ENCODE measurements at regions of chr12 and their contacts with region 1.

Region 1: DNA sequence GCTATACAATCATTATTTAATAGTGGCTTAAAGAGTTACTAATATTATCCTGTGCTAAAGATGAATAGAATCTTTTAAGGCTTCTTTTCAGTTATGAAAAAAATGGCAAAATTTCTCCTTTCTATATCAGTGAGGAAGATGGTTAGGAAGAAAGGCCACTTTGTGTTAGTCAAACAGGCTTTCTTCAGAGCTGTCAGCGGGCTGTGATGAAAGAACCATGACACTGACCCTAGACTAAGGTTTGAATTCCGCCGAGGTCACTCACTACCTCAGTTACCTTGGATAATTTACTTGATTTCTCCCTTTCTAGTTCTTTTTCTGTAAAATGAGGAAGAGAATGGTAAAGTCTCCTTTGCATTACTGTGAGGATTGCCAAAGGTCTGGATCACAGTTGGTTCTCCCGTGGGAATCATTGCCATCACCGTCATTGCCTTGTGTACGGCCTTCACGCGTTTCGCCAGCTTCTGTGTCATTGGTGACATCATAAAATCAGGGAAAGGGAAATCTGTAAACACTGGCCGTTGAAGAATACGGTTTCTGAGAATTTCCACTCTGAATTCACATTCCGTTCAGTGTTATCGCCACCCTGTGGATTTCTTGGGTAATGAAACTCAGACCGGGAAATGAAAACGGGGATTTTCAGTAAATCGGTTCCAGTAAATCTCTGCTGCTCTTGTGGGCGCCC is 26.7 kb upstream of the YBX3 start:
- DNase-seq: peak; percentile 62 to 72 (median 69)
- H3K4me3 ChIP-seq: no peak overlapping the region
- H3K4me3 Mint-ChIP-seq: peak overlapping the region in 6 of 8 donors; percentile 30 to 70 (median 60)
- H3K27ac ChIP-seq: no peak overlapping the region
- H3K27ac Mint-ChIP-seq: peak overlapping the region in 3 of 7 donors; percentile 7 to 50 (median 41)
- H3K4me1 ChIP-seq: peaks cover 10% of the 10 kb centered on the region
- H3K4me1 Mint-ChIP-seq: peaks cover 5 to 8% (median 6%) of the 10 kb centered on the region in 4 donors
- H3K27me3 ChIP-seq: peaks cover 6% of the 10 kb centered on the region
- H3K27me3 Mint-ChIP-seq: peaks cover 17 to 29% of the 10 kb centered on the region in 2 donors

Region 2: DNA sequence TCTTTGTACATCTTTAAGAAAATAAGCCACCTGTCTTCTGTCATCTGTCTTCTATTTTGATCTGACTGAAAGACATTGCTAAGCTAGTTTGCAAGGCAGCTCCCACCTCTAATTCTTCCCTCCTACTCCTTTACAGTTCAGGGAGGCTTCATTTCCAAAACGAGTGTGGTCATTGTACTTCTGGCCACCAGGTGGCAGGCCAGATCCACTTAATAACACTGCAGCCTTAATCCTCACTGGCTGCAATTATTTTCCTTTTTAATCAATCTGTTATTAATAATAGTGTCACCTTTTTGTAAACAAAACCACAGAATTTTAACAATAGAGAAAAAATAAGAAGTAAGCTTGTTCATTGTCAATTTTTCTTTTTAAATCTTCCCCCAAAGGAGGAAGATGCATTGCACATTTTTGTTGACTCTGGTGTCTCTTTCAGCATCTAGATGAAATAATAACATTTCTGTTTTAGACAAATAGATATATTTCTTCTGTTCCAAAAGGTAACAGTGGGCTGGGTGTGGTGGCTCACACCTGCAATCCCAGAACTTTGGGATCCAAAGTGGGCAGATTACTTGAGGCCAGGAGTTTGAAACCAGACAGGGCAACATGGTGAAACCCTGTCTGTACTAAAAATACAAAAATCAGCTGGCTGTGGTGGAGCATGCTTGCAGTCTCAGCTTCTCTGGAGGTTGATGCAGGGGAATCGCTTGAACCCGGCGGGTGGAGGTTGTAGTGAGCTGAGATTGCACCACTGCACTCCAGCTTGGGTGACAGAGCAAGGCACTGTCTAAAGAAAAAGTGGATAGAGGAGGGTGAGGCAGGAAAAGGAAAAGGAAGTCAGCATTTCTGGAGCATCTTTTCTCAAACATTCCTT is 513.8 kb before region 1 on chr12:
- CTCF ChIA-PET with region 1: interaction called, 18 read pairs
- POLR2A ChIA-PET with region 1: no interaction called
- intact Hi-C with region 1: loop called (anchors 1 kb)
- DNase-seq: peak in 4 of 5 donors; percentile 30 to 43 (median 38)
- H3K4me3 ChIP-seq: no peak overlapping the region
- H3K4me3 Mint-ChIP-seq: no peak overlapping the region
- H3K27ac ChIP-seq: no peak overlapping the region
- H3K27ac Mint-ChIP-seq: no peak overlapping the region
- H3K4me1 ChIP-seq: no peaks in the 10 kb centered on the region
- H3K4me1 Mint-ChIP-seq: peaks cover 0 to 2% (median 0%) of the 10 kb centered on the region in 4 donors
- H3K27me3 ChIP-seq: no peaks in the 10 kb centered on the region
- H3K27me3 Mint-ChIP-seq: peaks cover 0 to 1% of the 10 kb centered on the region in 2 donors

Region 3: GRCh38 chr12:10562306-10562933 is 187.4 kb before region 1 on chr12:
- CTCF ChIA-PET with region 1: no interaction called
- POLR2A ChIA-PET with region 1: no interaction called
- intact Hi-C with region 1: loop called (anchors 2 kb)
- DNase-seq: peak in 4 of 5 donors; percentile 31 to 45 (median 38)
- H3K4me3 ChIP-seq: no peak overlapping the region
- H3K4me3 Mint-ChIP-seq: no peak overlapping the region
- H3K27ac ChIP-seq: no peak overlapping the region
- H3K27ac Mint-ChIP-seq: no peak overlapping the region
- H3K4me1 ChIP-seq: no peaks in the 10 kb centered on the region
- H3K4me1 Mint-ChIP-seq: no peaks in the 10 kb centered on the region
- H3K27me3 ChIP-seq: no peaks in the 10 kb centered on the region
- H3K27me3 Mint-ChIP-seq: peaks cover 11 to 24% of the 10 kb centered on the region in 2 donors

Region 4: DNA sequence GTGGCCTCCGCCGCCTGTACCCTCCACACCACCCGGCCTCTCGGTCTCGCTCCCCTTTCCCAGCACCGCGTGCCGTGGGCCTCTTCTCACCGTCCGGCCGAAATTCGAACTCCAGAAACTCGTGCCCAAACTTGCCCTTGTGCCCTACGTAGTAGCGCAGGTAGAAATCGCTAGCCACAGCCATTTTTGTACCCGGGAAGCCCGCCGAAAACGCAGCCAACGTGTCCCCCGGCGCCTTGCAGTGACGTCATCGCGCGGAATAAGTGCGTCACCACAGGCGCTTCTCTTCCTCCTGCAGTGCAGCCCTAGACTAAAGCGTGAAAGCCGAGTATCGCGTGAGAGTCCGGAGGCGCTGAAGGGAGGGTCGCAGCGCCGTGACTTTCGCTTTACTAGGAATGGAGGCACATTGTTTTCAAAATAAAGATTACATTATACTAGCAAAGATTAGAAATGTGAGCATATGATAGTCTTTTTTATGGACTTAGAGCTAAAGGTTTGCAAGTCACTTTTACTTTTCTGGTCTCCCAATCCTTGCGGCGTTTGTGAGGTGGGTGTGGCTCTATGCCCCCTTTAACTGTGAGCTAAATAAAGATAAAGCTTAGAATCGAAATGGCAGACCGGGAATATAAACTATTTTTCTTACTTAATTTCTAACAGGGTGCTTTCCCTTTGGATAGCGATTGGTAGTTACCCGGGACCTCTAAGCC is 136.3 kb before region 1 on chr12 and contains the start of gene MAGOHB:
- CTCF ChIA-PET with region 1: no interaction called
- POLR2A ChIA-PET with region 1: no interaction called
- intact Hi-C with region 1: loop called (anchors 1 kb)
- DNase-seq: peak; percentile 96 to 98 (median 96)
- H3K4me3 ChIP-seq: peak within 1 kb of the TSS; percentile 92 to 96
- H3K4me3 Mint-ChIP-seq: peak within 1 kb of the TSS; percentile 99 to 100 (median 100)
- H3K27ac ChIP-seq: peak within 1 kb of the TSS; percentile 93
- H3K27ac Mint-ChIP-seq: peak within 1 kb of the TSS; percentile 99 to 100 (median 100)
- H3K4me1 ChIP-seq: peaks cover 22% of the 10 kb centered on the region
- H3K4me1 Mint-ChIP-seq: peaks cover 20 to 36% (median 27%) of the 10 kb centered on the region in 4 donors
- H3K27me3 ChIP-seq: no peaks in the 10 kb centered on the region
- H3K27me3 Mint-ChIP-seq: peaks cover 5 to 10% of the 10 kb centered on the region in 2 donors
- total RNA-seq, gene MAGOHB: 19.3 to 22.0 TPM

Region 5: DNA sequence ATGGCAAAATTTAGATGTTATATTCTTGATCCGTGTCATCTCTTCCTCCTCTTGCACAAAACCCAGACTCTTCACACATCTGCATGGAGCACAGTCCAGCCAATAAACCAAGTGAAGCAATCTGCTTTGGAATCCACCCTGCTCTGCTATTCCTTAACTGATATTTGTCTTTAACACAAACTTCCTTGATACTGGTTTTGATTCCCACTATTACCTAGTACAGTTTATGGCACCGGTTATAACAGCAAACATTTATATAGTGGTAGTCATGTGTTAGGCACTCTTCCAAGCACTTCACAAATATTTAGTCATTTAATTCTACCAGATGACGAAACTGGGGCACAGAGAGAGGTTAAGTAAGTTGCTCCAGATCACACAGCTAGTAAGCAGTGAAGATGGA is 88.5 kb before region 1 on chr12:
- CTCF ChIA-PET with region 1: no interaction called
- POLR2A ChIA-PET with region 1: no interaction called
- intact Hi-C with region 1: no loop called
- DNase-seq: no peak
- H3K4me3 ChIP-seq: no peak overlapping the region
- H3K4me3 Mint-ChIP-seq: no peak overlapping the region
- H3K27ac ChIP-seq: no peak overlapping the region
- H3K27ac Mint-ChIP-seq: no peak overlapping the region
- H3K4me1 ChIP-seq: no peaks in the 10 kb centered on the region
- H3K4me1 Mint-ChIP-seq: no peaks in the 10 kb centered on the region
- H3K27me3 ChIP-seq: no peaks in the 10 kb centered on the region
- H3K27me3 Mint-ChIP-seq: peaks cover 8 to 24% of the 10 kb centered on the region in 2 donors

Region 6: DNA sequence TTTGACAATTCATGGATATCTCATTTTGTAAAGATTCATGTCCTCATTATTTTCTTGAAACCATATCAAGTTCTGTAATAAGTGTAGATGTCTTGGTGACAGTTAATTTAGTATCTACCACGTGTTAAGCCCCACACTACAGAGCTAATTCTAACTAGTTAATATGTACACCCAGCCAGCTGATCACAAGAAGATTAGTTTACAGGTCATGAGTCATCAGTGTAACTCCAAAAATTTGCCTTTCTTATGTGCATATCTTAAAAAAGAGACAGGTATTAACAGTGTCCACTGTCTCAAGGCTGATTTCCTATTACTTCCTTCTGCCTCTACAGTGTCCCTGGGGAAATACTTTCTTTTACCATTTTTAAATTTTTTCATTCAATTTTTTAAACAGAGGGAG is 13.4 kb before region 1 on chr12:
- CTCF ChIA-PET with region 1: interaction called, 11 read pairs
- POLR2A ChIA-PET with region 1: no interaction called
- intact Hi-C with region 1: no loop called
- DNase-seq: no peak
- H3K4me3 ChIP-seq: no peak overlapping the region
- H3K4me3 Mint-ChIP-seq: no peak overlapping the region
- H3K27ac ChIP-seq: no peak overlapping the region
- H3K27ac Mint-ChIP-seq: no peak overlapping the region
- H3K4me1 ChIP-seq: no peaks in the 10 kb centered on the region
- H3K4me1 Mint-ChIP-seq: no peaks in the 10 kb centered on the region
- H3K27me3 ChIP-seq: no peaks in the 10 kb centered on the region
- H3K27me3 Mint-ChIP-seq: peaks cover 9 to 22% of the 10 kb centered on the region in 2 donors

Region 7: DNA sequence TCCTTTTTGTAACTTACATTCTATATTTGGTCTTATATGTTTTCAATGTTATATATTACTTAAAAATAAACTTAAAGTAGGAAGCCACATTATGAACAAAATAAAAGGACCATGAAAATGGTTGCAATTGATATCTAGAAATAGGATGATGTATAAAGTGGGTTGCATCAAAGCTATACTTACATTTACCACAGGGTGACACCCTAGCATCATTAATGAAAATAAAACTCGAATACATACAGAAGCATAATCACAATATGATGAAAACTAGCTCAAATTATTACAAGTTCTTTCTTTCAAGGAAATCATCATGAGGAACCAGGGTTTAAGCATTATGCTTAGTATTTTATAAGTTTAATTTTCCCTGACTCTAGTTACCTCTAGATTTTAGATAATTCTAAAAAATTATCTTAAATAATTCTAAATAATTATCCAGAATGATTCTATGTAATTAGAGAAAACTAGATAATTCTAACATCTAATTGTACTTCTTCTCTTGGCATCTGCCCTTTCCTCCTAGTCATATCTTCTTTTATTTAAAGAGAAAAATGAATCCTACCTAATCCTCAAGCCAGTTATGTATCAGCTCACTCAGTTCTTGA is 21.4 kb after region 1 on chr12:
- CTCF ChIA-PET with region 1: interaction called, 15 read pairs
- POLR2A ChIA-PET with region 1: no interaction called
- intact Hi-C with region 1: no loop called
- DNase-seq: peak in 4 of 5 donors; percentile 45 to 57 (median 50)
- H3K4me3 ChIP-seq: no peak overlapping the region
- H3K4me3 Mint-ChIP-seq: no peak overlapping the region
- H3K27ac ChIP-seq: no peak overlapping the region
- H3K27ac Mint-ChIP-seq: no peak overlapping the region
- H3K4me1 ChIP-seq: no peaks in the 10 kb centered on the region
- H3K4me1 Mint-ChIP-seq: no peaks in the 10 kb centered on the region
- H3K27me3 ChIP-seq: peaks cover 3% of the 10 kb centered on the region
- H3K27me3 Mint-ChIP-seq: peaks cover 24 to 27% of the 10 kb centered on the region in 2 donors

Region 8: DNA sequence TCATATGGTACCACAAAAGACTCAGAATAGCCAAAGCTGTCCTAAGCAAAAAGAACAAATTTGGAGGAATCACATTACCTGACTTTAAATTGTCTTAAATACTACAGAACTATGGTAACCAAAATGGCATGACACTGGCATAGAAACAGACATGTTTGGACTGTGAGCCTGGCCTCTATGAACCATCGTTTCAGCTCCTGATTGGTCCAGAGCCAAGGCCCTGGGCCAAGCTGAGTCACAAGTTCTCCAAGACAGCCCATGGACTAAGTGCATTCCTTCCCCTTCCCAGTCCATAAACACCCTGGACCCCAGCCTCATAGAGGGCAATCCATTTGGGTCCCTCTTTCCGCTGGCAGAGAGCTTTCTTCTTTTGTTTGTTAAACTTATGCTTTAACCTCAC is 111.5 kb after region 1 on chr12:
- CTCF ChIA-PET with region 1: no interaction called
- POLR2A ChIA-PET with region 1: no interaction called
- intact Hi-C with region 1: no loop called
- DNase-seq: no peak
- H3K4me3 ChIP-seq: no peak overlapping the region
- H3K4me3 Mint-ChIP-seq: no peak overlapping the region
- H3K27ac ChIP-seq: no peak overlapping the region
- H3K27ac Mint-ChIP-seq: no peak overlapping the region
- H3K4me1 ChIP-seq: no peaks in the 10 kb centered on the region
- H3K4me1 Mint-ChIP-seq: no peaks in the 10 kb centered on the region
- H3K27me3 ChIP-seq: no peaks in the 10 kb centered on the region
- H3K27me3 Mint-ChIP-seq: no peaks in the 10 kb centered on the region